ENCODE measurements at regions of chr10 and their contacts with region 1.

Region 1: GRCh38 chr10:124719213-124719851 is 24.8 kb downstream of the FAM53B start:
- DNase-seq: peak; percentile 68 to 77
- H3K4me3 ChIP-seq: no peak overlapping the region
- H3K27ac ChIP-seq: no peak overlapping the region
- H3K4me1 ChIP-seq: peaks cover 11% of the 10 kb centered on the region; the same call in 1 of the 2 replicates
- H3K27me3 ChIP-seq: no peaks in the 10 kb centered on the region
- CTCF ChIP-seq: peak; percentile 51; the same call in 1 of the 2 replicates

Region 2: DNA sequence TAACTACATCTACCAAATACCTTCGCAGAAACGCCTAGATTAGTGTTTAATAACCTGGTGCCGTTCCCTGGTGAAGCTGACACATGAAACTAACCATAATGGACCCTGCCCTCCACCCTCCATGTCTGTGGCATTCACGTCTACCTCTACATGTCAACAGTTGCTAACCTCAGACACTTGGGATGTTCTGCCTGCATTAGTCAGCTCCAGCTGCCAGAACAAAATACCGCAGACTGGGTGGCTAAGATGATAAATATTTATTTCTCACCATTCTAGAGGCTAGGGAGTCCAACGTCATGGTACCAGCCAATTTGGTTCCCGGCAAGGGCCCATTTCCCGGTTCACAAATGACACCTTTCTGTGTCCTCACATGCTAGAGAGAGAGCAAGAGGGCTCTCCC is 507.4 kb before region 1 on chr10:
- CTCF ChIA-PET with region 1: no interaction called
- POLR2A ChIA-PET with region 1: no interaction called
- intact Hi-C with region 1: no loop called
- DNase-seq: no peak
- H3K4me3 ChIP-seq: no peak overlapping the region
- H3K27ac ChIP-seq: no peak overlapping the region
- H3K4me1 ChIP-seq: peaks cover 8% of the 10 kb centered on the region
- H3K27me3 ChIP-seq: no peaks in the 10 kb centered on the region
- CTCF ChIP-seq: no peak

Region 3: DNA sequence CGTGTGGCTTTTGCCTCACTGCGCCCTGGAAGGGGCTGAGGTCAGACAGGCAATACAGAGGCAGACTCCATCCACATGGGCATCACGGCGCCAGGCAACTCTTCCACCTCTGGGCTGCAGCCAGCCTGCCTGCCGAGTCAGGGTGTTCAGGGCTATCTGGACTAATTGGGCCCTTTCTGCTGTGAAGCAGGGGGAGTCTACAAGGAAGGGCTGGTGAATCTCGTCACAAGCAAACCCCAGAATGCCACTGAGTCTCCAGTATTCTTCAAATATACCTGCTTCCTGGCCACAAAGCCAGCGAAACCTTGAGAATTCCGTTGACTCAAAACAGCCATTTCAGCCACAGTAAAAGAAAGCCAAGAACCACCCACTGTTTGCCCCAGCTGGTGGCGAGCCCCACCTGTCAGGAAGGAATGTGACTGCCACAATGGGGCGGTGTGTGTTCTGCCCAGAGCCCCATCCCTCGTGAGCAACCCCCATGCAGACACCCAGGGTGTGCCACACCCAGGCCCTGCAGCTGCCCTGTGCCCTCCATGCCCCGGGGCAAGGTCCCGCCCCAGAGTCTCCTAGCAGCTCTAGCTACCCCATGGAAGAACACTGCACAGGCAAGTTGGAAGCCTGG is 92.5 kb before region 1 on chr10:
- CTCF ChIA-PET with region 1: no interaction called
- POLR2A ChIA-PET with region 1: no interaction called
- intact Hi-C with region 1: loop called (anchors 2 kb)
- DNase-seq: peak; percentile 83 to 94
- H3K4me3 ChIP-seq: no peak overlapping the region
- H3K27ac ChIP-seq: peak overlapping the region; percentile 55
- H3K4me1 ChIP-seq: peaks cover 29% of the 10 kb centered on the region
- H3K27me3 ChIP-seq: no peaks in the 10 kb centered on the region
- CTCF ChIP-seq: no peak

Region 4: DNA sequence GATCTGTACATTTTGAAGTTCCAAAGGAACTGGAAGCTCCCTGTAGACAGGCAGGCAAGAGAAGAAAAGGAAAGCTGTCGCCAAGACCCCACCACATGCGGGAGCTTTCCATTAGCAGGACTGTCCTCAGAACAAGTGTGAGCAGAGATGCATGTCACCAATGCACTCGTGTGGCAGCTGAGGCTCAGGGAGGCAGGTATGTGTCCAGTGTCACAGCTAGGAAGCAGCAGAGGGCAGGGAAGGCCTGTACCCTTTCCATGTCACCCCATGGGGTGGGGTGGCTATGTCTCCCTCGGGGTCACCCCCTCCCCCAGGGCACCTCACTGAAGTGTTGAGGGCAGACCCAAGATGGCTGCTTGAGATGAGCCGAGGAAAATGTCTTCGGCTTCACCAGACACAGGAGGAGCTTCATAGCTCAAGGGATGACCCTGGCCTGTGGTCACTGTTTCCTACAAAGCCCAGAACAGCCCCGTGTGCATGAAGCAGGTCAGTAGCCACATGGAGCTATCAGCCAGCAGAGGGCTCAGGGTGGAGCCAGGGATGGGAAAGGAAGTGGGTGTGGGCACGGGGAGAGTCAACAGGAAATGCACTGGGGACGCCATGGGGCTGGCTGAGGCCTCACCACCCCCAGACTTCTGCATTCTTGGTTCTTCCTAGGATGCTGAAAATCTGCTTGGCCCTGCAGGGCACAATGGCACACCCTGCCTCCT is 71.8 kb before region 1 on chr10:
- CTCF ChIA-PET with region 1: no interaction called
- POLR2A ChIA-PET with region 1: no interaction called
- intact Hi-C with region 1: loop called (anchors 2 kb)
- DNase-seq: no peak
- H3K4me3 ChIP-seq: no peak overlapping the region
- H3K27ac ChIP-seq: no peak overlapping the region
- H3K4me1 ChIP-seq: peaks cover 16% of the 10 kb centered on the region
- H3K27me3 ChIP-seq: no peaks in the 10 kb centered on the region
- CTCF ChIP-seq: no peak

Region 5: DNA sequence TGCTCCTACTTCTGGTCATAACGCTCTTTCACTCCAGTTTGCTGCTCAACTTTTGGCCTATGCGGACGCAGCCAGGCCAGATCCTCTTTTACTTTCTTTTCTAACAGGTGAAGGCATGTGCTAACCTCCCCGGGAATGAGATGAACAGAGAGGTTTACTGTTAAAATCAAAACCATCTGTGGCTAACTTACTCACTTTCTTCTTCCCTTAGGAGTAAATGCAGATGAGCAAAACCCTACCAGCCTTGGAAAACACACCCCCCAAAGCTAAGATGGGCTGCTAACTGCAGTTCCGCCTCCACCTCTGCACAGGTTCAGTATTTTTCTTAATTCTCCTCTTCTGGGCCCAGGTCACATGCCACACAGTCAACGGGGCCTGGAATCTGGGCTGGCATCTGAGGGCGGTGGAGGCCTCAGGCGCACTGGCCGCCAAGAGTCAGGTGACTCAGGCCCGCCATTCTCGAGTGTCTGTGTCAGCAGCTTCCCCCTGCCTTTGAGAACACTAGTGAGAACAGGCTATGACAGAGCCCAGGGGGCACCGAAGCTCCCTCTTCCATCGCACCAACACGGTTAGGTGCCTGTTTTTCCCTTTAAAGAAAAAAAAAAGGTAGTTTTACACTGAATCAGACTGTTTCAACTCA is 13.7 kb after region 1 on chr10:
- CTCF ChIA-PET with region 1: no interaction called
- POLR2A ChIA-PET with region 1: no interaction called
- intact Hi-C with region 1: no loop called
- DNase-seq: no peak
- H3K4me3 ChIP-seq: no peak overlapping the region
- H3K27ac ChIP-seq: no peak overlapping the region
- H3K4me1 ChIP-seq: peaks cover 8% of the 10 kb centered on the region; the same call in 1 of the 2 replicates
- H3K27me3 ChIP-seq: no peaks in the 10 kb centered on the region
- CTCF ChIP-seq: no peak